CD8-positive, alpha-beta T cell (primary cell): ENCODE measurements at regions of chr19 and their contacts with region 1.

Region 1: DNA sequence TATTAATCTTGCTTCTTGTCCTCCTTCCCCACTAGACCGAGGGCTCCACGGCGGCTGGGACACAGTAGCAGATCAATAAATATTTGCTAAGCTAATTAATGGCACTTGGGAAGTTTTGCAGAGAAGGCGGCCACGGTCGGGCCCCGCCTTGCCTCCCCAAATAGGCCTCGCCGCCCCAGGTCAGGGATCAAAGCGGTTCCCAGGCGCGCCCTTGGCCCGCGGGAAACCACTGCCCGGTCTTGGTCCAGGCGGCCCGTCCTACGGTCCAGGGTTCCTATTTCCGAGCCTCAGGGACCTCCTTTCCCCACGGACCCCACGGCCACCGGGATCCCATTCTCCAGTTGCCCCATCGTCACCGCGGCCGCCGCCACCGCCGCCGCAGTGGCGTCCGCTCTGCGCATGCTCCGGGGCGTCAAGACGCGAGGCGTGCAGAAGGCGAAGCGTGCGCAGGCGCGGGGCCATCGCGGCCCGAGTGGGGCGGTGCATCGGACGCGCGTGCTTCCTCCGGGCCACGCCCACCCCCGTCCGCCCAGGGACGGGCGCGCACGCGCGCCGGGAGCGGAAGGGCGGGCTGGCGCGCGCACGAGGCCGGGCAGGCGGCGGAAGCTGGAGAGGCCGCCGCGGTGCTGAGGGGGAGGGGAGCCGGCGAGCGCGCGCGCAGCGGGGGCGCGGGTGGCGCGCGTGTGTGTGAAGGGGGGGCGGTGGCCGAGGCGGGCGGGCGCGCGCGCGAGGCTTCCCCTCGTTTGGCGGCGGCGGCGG is at the start of gene SMARCA4:
- DNase-seq: peak; percentile 95 to 100 (median 99)
- ATAC-seq: peak; percentile 81
- H3K4me3 ChIP-seq: peak within 1 kb of the TSS; percentile 79 to 83
- H3K4me3 Mint-ChIP-seq: peak within 1 kb of the TSS; percentile 88
- H3K27ac ChIP-seq: peak within 1 kb of the TSS; percentile 87 to 88
- H3K27ac Mint-ChIP-seq: peak within 1 kb of the TSS; percentile 92
- H3K4me1 ChIP-seq: peaks cover 35% of the 10 kb centered on the region
- H3K4me1 Mint-ChIP-seq: peaks cover 34% of the 10 kb centered on the region
- H3K27me3 ChIP-seq: no peaks in the 10 kb centered on the region
- H3K27me3 Mint-ChIP-seq: no peaks in the 10 kb centered on the region
- CTCF ChIP-seq: no peak
- total RNA-seq, gene SMARCA4: 73.5 to 76.2 TPM

Region 2: GRCh38 chr19:10095948-10096621 is 864.4 kb before region 1 on chr19:
- CTCF ChIA-PET with region 1: no interaction called
- POLR2A ChIA-PET with region 1: no interaction called
- intact Hi-C with region 1: loop called in 1 of 2 experiments (anchors 5 kb)
- DNase-seq: peak; percentile 79 to 97 (median 90)
- ATAC-seq: peak; percentile 96
- H3K4me3 ChIP-seq: peak overlapping the region; percentile 41 to 67
- H3K4me3 Mint-ChIP-seq: peak overlapping the region; percentile 29
- H3K27ac ChIP-seq: peak overlapping the region; percentile 62 to 70
- H3K27ac Mint-ChIP-seq: peak overlapping the region; percentile 45
- H3K4me1 ChIP-seq: peaks cover 24% of the 10 kb centered on the region
- H3K4me1 Mint-ChIP-seq: peaks cover 18% of the 10 kb centered on the region
- H3K27me3 ChIP-seq: no peaks in the 10 kb centered on the region
- H3K27me3 Mint-ChIP-seq: no peaks in the 10 kb centered on the region
- CTCF ChIP-seq: no peak

Region 3: DNA sequence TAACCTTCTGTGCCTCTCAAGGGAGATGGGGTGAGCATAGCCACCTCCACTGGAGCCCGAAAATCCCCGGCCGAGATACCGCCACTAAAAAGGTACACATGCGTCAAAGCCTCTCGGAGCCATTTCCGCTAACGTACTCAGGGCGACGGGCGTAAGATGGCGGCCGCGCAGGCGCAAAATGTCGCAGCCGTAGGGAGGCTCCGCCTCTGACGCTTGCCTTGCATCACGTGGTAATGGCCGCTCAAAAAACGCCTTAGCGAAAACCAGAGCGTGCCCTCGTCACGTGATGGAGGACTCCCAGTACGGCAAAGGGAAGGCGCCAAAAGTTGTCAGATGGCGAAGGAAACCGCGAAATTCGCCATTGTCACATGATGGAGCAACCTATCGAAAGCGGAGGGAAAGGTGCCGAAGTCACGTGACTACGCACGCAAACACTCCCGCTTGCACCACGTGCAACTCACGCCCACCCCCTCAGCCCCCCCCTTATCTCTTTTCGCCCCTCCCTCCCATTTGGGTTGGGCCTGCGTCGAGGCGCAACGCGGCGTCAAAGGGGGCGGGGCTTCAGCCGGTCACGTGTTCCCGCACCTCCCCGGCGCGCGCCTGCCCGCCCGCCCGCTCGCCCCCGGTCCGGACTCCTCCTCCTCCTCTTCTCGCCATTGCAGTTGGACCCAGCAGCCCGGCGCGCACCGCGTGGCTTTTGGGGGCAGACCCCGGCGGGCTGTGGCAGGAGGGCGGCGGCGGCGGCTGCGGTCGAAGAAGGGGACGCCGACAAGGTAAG is 306.6 kb before region 1 on chr19 and contains the start of gene ILF3:
- CTCF ChIA-PET with region 1: no interaction called
- POLR2A ChIA-PET with region 1: no interaction called
- intact Hi-C with region 1: loop called in 1 of 2 experiments (anchors 2 kb)
- DNase-seq: peak; percentile 100
- ATAC-seq: peak; percentile 77
- H3K4me3 ChIP-seq: peak within 1 kb of the TSS; percentile 83
- H3K4me3 Mint-ChIP-seq: peak within 1 kb of the TSS; percentile 94
- H3K27ac ChIP-seq: peak within 1 kb of the TSS; percentile 98 to 99
- H3K27ac Mint-ChIP-seq: peak within 1 kb of the TSS; percentile 98
- H3K4me1 ChIP-seq: peaks cover 41% of the 10 kb centered on the region
- H3K4me1 Mint-ChIP-seq: peaks cover 44% of the 10 kb centered on the region
- H3K27me3 ChIP-seq: no peaks in the 10 kb centered on the region
- H3K27me3 Mint-ChIP-seq: no peaks in the 10 kb centered on the region
- CTCF ChIP-seq: no peak
- total RNA-seq, gene ILF3: 604 to 613 TPM

Region 4: GRCh38 chr19:10835754-10836477 is 124.6 kb before region 1 on chr19 and contains the start of gene TMED1:
- CTCF ChIA-PET with region 1: no interaction called
- POLR2A ChIA-PET with region 1: no interaction called
- intact Hi-C with region 1: no loop called
- DNase-seq: peak; percentile 82 to 98 (median 93)
- ATAC-seq: peak; percentile 86
- H3K4me3 ChIP-seq: peak within 1 kb of the TSS; percentile 88 to 96
- H3K4me3 Mint-ChIP-seq: peak within 1 kb of the TSS; percentile 98
- H3K27ac ChIP-seq: peak within 1 kb of the TSS; percentile 87 to 96
- H3K27ac Mint-ChIP-seq: peak within 1 kb of the TSS; percentile 99
- H3K4me1 ChIP-seq: peaks cover 14% of the 10 kb centered on the region
- H3K4me1 Mint-ChIP-seq: peaks cover 9% of the 10 kb centered on the region
- H3K27me3 ChIP-seq: no peaks in the 10 kb centered on the region
- H3K27me3 Mint-ChIP-seq: no peaks in the 10 kb centered on the region
- CTCF ChIP-seq: no peak
- total RNA-seq, gene TMED1: 8.2 to 13.5 TPM

Region 5: DNA sequence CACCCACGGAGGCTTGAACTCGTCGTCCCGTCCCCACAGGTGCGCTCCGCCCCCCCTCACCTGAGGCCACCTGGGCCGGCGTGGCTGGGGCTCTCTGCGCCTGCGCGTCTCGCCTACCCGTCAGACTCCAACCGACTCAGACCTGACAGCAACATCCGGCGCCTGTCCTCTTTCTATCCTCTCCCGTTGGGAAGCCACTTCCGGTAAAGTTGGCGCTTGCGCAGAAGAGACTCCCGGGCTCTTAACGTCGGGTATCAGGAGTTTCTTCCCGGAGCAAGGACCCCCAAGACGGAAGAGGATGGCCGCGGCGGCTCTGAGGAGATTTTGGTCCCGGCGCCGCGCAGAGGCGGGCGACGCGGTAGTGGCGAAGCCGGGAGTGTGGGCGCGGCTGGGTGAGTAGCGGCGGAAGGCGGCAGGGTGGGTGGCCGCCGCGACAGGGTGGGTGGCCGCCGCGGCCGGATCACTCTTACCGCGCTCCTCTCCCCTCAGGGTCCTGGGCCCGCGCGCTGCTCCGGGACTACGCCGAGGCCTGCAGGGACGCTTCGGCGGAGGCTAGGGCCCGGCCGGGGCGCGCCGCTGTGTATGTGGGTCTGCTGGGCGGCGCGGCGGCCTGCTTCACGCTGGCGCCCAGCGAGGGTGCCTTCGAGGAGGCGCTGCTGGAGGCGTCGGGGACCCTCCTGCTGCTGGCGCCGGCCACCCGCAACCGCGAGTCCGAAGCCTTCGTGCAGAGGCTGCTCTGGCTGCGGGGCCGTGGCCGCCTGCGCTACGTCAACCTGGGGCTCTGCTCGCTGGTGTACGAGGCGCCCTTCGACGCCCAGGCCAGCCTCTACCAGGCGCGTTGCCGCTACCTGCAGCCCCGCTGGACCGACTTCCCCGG is 31.7 kb before region 1 on chr19 and contains the starts of genes TIMM29 and YIPF2:
- CTCF ChIA-PET with region 1: no interaction called
- POLR2A ChIA-PET with region 1: no interaction called
- intact Hi-C with region 1: loop called (anchors 1 to 5 kb)
- DNase-seq: peak; percentile 86 to 97 (median 94)
- ATAC-seq: peak; percentile 88
- H3K4me3 ChIP-seq: peak within 1 kb of the TSS; percentile 73 to 86
- H3K4me3 Mint-ChIP-seq: peak within 1 kb of the TSS; percentile 95
- H3K27ac ChIP-seq: peak within 1 kb of the TSS; percentile 63 to 78
- H3K27ac Mint-ChIP-seq: peak within 1 kb of the TSS; percentile 91
- H3K4me1 ChIP-seq: peaks cover 17% of the 10 kb centered on the region
- H3K4me1 Mint-ChIP-seq: peaks cover 31% of the 10 kb centered on the region
- H3K27me3 ChIP-seq: no peaks in the 10 kb centered on the region
- H3K27me3 Mint-ChIP-seq: no peaks in the 10 kb centered on the region
- CTCF ChIP-seq: no peak
- total RNA-seq, gene TIMM29: 27.9 TPM
- total RNA-seq, gene YIPF2: 25.9 to 27.6 TPM

Region 6: GRCh38 chr19:10946964-10947657 is 13.4 kb before region 1 on chr19:
- CTCF ChIA-PET with region 1: interaction called, 19 read pairs
- POLR2A ChIA-PET with region 1: interaction called, 4 read pairs
- intact Hi-C with region 1: loop called (anchors 1 to 2 kb)
- DNase-seq: no peak
- ATAC-seq: no peak
- H3K4me3 ChIP-seq: no peak overlapping the region
- H3K4me3 Mint-ChIP-seq: no peak overlapping the region
- H3K27ac ChIP-seq: no peak overlapping the region
- H3K27ac Mint-ChIP-seq: no peak overlapping the region
- H3K4me1 ChIP-seq: no peaks in the 10 kb centered on the region
- H3K4me1 Mint-ChIP-seq: peaks cover 4% of the 10 kb centered on the region
- H3K27me3 ChIP-seq: no peaks in the 10 kb centered on the region
- H3K27me3 Mint-ChIP-seq: no peaks in the 10 kb centered on the region
- CTCF ChIP-seq: no peak

Region 7: GRCh38 chr19:11096210-11096841 is 135.8 kb after region 1 on chr19:
- CTCF ChIA-PET with region 1: no interaction called
- POLR2A ChIA-PET with region 1: no interaction called
- intact Hi-C with region 1: loop called (anchors 1 to 2 kb)
- DNase-seq: peak in 4 of 9 experiments; percentile 28 to 69 (median 55)
- ATAC-seq: peak; percentile 18
- H3K4me3 ChIP-seq: peak overlapping the region in 1 of 2 experiments; percentile 14
- H3K4me3 Mint-ChIP-seq: peak overlapping the region; percentile 64
- H3K27ac ChIP-seq: peak overlapping the region in 1 of 2 experiments; percentile 88
- H3K27ac Mint-ChIP-seq: peak overlapping the region; percentile 90
- H3K4me1 ChIP-seq: peaks cover 40% of the 10 kb centered on the region
- H3K4me1 Mint-ChIP-seq: peaks cover 43% of the 10 kb centered on the region
- H3K27me3 ChIP-seq: no peaks in the 10 kb centered on the region
- H3K27me3 Mint-ChIP-seq: no peaks in the 10 kb centered on the region
- CTCF ChIP-seq: no peak

Region 8: DNA sequence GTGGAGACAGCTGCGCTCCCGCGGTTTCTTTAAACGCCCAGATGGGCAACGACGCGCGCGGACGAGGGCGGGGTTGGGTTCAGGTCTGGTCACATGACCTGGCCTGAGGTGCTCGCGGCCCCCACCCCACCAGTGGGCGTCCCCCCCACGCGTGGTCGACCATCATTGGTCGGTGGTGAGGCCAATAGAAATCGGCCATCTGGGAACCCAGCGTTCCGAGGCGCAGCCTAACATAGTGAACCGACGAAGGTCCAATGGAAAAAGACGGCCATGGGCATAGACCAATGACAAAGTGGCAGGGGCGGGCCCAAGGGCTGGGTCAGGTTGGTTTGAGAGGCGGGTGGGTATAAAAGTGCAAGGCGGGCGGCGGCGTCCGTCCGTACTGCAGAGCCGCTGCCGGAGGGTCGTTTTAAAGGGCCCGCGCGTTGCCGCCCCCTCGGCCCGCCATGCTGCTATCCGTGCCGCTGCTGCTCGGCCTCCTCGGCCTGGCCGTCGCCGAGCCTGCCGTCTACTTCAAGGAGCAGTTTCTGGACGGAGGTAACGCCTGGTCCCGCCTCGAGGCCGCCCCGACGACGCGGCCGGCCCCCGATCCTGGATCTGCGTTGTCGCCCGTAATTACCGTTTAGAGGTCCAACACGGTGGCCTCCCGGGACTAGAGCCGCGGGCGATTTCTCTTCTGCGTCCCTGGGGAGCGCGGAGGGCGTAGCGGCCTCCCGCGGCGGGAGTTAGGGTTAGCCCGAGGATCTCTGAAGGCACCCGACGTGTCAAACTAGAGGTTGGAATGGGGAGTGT is 1977.9 kb after region 1 on chr19 and contains the start of gene CALR:
- CTCF ChIA-PET with region 1: no interaction called
- POLR2A ChIA-PET with region 1: no interaction called
- intact Hi-C with region 1: loop called in 1 of 2 experiments (anchors 10 kb)
- DNase-seq: peak; percentile 98 to 100 (median 99)
- ATAC-seq: peak; percentile 88
- H3K4me3 ChIP-seq: peak within 1 kb of the TSS; percentile 71 to 91
- H3K4me3 Mint-ChIP-seq: peak within 1 kb of the TSS; percentile 99
- H3K27ac ChIP-seq: peak within 1 kb of the TSS; percentile 86
- H3K27ac Mint-ChIP-seq: peak within 1 kb of the TSS; percentile 96
- H3K4me1 ChIP-seq: peaks cover 41% of the 10 kb centered on the region
- H3K4me1 Mint-ChIP-seq: peaks cover 58% of the 10 kb centered on the region
- H3K27me3 ChIP-seq: no peaks in the 10 kb centered on the region
- H3K27me3 Mint-ChIP-seq: no peaks in the 10 kb centered on the region
- CTCF ChIP-seq: no peak
- total RNA-seq, gene CALR: 618 to 650 TPM